Activated B cell treated with CpG ODN at 0.5 μM for 24 hours (primary cell): ENCODE measurements at regions of chr10 and their contacts with region 1.

Region 1: GRCh38 chr10:86755740-86756510 is 494 bp upstream of the BMPR1A start:
- DNase-seq: peak; percentile 90
- ATAC-seq: peak; percentile 94
- H3K4me3 Mint-ChIP-seq: peak overlapping the region; percentile 86
- H3K27ac Mint-ChIP-seq: peak overlapping the region; percentile 63
- H3K4me1 Mint-ChIP-seq: peaks cover 40% of the 10 kb centered on the region
- H3K27me3 Mint-ChIP-seq: peaks cover 15% of the 10 kb centered on the region
- CTCF ChIP-seq: no peak

Region 2: GRCh38 chr10:86786368-86786767 is 30.4 kb after region 1 on chr10:
- CTCF ChIA-PET with region 1: no interaction called
- POLR2A ChIA-PET with region 1: no interaction called
- intact Hi-C with region 1: no loop called
- DNase-seq: no peak
- ATAC-seq: no peak
- H3K4me3 Mint-ChIP-seq: no peak overlapping the region
- H3K27ac Mint-ChIP-seq: no peak overlapping the region
- H3K4me1 Mint-ChIP-seq: peaks cover 8% of the 10 kb centered on the region
- H3K27me3 Mint-ChIP-seq: no peaks in the 10 kb centered on the region
- CTCF ChIP-seq: no peak

Region 3: DNA sequence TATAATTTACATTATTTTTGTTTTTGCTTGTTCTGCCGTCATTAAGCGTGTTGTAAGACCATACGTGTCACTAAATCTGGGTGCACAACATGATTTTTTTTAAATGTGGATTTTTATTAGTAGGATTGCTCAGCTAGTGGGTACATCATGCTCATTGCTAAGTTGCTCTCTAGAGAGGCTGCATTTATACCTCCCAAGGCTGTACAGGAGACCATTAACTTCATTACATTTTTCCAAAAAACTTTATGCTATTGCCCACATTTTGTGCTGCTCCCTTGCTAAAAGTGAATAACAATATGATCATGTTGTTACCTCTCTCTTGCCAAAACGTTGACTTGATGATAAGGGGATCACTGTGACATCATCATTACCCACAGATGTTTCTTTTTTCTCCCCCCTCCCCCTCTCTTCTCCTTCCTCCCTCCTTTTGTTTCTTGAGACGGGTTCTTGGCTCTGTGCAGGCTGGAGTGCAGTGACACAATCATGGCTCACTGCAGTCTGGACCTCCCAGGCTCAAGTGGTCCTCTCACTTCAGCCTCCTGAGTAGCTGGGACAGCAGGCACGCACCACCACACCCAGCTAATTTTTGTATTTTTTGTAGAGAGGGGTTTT is 65.6 kb after region 1 on chr10:
- CTCF ChIA-PET with region 1: no interaction called
- POLR2A ChIA-PET with region 1: no interaction called
- intact Hi-C with region 1: no loop called
- DNase-seq: no peak
- ATAC-seq: no peak
- H3K4me3 Mint-ChIP-seq: no peak overlapping the region
- H3K27ac Mint-ChIP-seq: no peak overlapping the region
- H3K4me1 Mint-ChIP-seq: no peaks in the 10 kb centered on the region
- H3K27me3 Mint-ChIP-seq: no peaks in the 10 kb centered on the region
- CTCF ChIP-seq: no peak

Region 4: DNA sequence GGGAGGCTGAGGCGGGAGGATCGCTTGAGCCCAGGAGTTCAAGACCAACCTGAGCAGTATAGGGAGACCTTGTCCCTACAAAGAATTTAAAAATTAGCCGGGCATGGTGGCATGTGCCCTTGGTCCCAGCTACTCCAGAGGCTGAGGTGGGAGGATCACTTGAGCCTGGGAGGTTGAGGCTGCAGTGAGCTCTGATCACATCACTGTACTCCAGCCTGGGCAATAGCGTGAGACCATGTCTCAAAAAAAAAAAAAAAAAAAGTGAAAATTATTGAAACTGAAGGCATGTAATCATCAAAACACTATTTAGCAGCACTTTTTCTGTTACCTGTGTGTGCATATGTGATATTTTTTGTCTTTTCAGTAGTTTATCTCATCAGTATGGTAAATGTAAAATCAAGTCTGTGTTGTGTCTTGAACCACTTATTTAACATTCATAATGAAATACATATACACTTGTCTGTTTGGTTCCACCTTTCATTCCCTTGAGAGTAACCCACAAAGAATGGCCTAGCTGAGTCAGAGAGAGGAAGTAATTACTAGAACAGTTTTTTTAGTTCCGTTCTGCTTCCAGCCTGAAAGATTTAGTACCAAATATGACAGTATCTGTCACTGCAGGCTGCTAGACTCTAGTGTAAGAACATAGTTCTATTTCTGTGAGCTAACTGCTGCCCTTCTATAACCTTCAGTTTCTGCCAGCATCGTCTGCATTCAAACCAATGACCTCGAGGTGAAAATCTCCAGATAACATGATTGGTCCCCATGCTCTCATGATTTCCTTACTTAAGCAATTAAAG is 132.9 kb after region 1 on chr10:
- CTCF ChIA-PET with region 1: no interaction called
- POLR2A ChIA-PET with region 1: no interaction called
- intact Hi-C with region 1: loop called (anchors 1 kb)
- DNase-seq: no peak
- ATAC-seq: peak; percentile 97
- H3K4me3 Mint-ChIP-seq: peak overlapping the region; percentile 5
- H3K27ac Mint-ChIP-seq: peak overlapping the region; percentile 35
- H3K4me1 Mint-ChIP-seq: peaks cover 8% of the 10 kb centered on the region
- H3K27me3 Mint-ChIP-seq: no peaks in the 10 kb centered on the region
- CTCF ChIP-seq: no peak